ENCODE measurements at regions of chr1 and their contacts with region 1.

Region 1: GRCh38 chr1:110963691-110964399 is at the start of gene LRIF1:
- DNase-seq: peak; percentile 98 to 100 (median 100)
- H3K4me3 ChIP-seq: peak within 1 kb of the TSS; percentile 90 to 95
- H3K4me3 Mint-ChIP-seq: peak within 1 kb of the TSS; percentile 81 to 96 (median 92)
- H3K27ac ChIP-seq: peak within 1 kb of the TSS; percentile 96
- H3K27ac Mint-ChIP-seq: peak within 1 kb of the TSS; percentile 93 to 100 (median 98)
- H3K4me1 ChIP-seq: peaks cover 31% of the 10 kb centered on the region
- H3K4me1 Mint-ChIP-seq: peaks cover 20 to 35% (median 27%) of the 10 kb centered on the region in 4 donors
- H3K27me3 ChIP-seq: peaks cover 3% of the 10 kb centered on the region
- H3K27me3 Mint-ChIP-seq: peaks cover 8 to 10% of the 10 kb centered on the region in 2 donors
- total RNA-seq, gene LRIF1: 27.0 to 28.2 TPM

Region 2: GRCh38 chr1:110746579-110747160 is 217.2 kb before region 1 on chr1:
- CTCF ChIA-PET with region 1: no interaction called
- POLR2A ChIA-PET with region 1: no interaction called
- intact Hi-C with region 1: no loop called
- DNase-seq: peak; percentile 51 to 61 (median 56)
- H3K4me3 ChIP-seq: no peak overlapping the region
- H3K4me3 Mint-ChIP-seq: no peak overlapping the region
- H3K27ac ChIP-seq: no peak overlapping the region
- H3K27ac Mint-ChIP-seq: no peak overlapping the region
- H3K4me1 ChIP-seq: no peaks in the 10 kb centered on the region
- H3K4me1 Mint-ChIP-seq: no peaks in the 10 kb centered on the region
- H3K27me3 ChIP-seq: no peaks in the 10 kb centered on the region
- H3K27me3 Mint-ChIP-seq: peaks cover 13 to 21% of the 10 kb centered on the region in 2 donors

Region 3: GRCh38 chr1:110896090-110896489 is 67.8 kb before region 1 on chr1:
- CTCF ChIA-PET with region 1: interaction called, 3 read pairs
- POLR2A ChIA-PET with region 1: interaction called, 6 read pairs
- intact Hi-C with region 1: loop called (anchors 5 kb)
- DNase-seq: peak; percentile 47 to 64 (median 55)
- H3K4me3 ChIP-seq: no peak overlapping the region
- H3K4me3 Mint-ChIP-seq: peak overlapping the region; percentile 17 to 73 (median 65)
- H3K27ac ChIP-seq: peak overlapping the region; percentile 27
- H3K27ac Mint-ChIP-seq: peak overlapping the region; percentile 78 to 95 (median 93)
- H3K4me1 ChIP-seq: peaks cover 80% of the 10 kb centered on the region
- H3K4me1 Mint-ChIP-seq: peaks cover 68 to 86% (median 78%) of the 10 kb centered on the region in 4 donors
- H3K27me3 ChIP-seq: no peaks in the 10 kb centered on the region
- H3K27me3 Mint-ChIP-seq: no peaks in the 10 kb centered on the region

Measured in CD4-positive, alpha-beta memory T cell (primary cell).